Ovary (tissue), 10 donors: ENCODE measurements at regions of chr2 and their contacts with region 1.

Region 1: GRCh38 chr2:218829868-218830451 is 1.6 kb downstream of the PRKAG3 start:
- DNase-seq: no peak
- H3K4me3 ChIP-seq: no peak overlapping the region
- H3K27ac ChIP-seq: no peak overlapping the region
- H3K4me1 ChIP-seq: no peaks in the 10 kb centered on the region
- H3K27me3 ChIP-seq: no peaks in the 10 kb centered on the region
- CTCF ChIP-seq: no peak
- EP300 ChIP-seq: no peak
- POLR2A ChIP-seq: no peak

Region 2: DNA sequence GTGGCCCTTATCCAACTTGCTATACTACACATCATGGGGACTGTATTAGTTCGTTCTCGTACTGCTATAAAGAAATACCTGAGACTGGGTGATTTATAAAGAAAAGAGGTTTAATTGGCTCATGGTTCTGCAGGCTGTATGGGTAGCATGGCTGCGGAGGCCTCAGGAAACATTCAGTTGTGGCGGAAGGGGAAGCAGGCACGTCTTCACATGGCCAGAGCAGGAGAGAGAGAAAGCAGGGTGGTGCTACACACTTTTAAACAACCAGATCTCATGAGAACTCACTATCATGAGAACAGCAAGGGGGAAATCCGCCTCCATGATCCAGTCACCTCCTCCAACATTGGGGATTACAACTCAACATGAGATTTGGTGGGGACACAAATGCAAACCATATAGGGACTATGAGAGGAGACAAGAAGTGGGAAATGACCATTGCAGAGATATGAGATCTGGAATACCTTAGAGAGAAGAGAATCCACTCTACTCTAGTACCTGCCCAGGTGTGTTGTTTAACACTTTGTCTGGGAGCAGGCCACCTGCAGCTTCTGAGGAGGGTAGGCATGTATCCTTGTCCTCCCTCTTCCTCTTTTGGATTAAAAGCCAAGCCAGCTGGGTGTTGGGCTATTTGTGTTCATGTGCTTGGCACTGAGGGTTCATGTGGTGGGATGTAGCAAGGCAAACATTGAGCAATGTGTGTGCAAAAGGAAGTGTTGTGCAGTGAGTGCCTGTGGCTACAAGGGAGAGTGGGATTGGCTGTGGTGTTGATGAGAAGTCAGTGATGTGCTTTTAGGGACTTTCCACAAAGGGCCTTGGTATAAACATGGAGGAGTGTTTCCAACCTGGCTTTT is 96.6 kb before region 1 on chr2:
- intact Hi-C with region 1: loop called in 1 of 4 experiments (anchors 10 kb)
- DNase-seq: no peak
- H3K4me3 ChIP-seq: no peak overlapping the region
- H3K27ac ChIP-seq: no peak overlapping the region
- H3K4me1 ChIP-seq: peaks cover 1% of the 10 kb centered on the region
- H3K27me3 ChIP-seq: no peaks in the 10 kb centered on the region
- CTCF ChIP-seq: no peak
- EP300 ChIP-seq: no peak
- POLR2A ChIP-seq: no peak